Prostate gland (tissue), 2 donors: ENCODE measurements at regions of chr12 and their contacts with region 1.

Region 1: GRCh38 chr12:104381731-104382480 is 74.8 kb upstream of the CHST11 start:
- DNase-seq: peak; percentile 78
- H3K4me3 ChIP-seq: no peak overlapping the region
- H3K27ac ChIP-seq: no peak overlapping the region
- H3K4me1 ChIP-seq: no peaks in the 10 kb centered on the region
- H3K27me3 ChIP-seq: no peaks in the 10 kb centered on the region
- CTCF ChIP-seq: peak; percentile 81 to 95 (median 90)
- POLR2A ChIP-seq: no peak

Region 2: GRCh38 chr12:104250366-104251125 is 131.4 kb before region 1 on chr12:
- intact Hi-C with region 1: no loop called
- DNase-seq: no peak
- H3K4me3 ChIP-seq: no peak overlapping the region
- H3K27ac ChIP-seq: no peak overlapping the region
- H3K4me1 ChIP-seq: no peaks in the 10 kb centered on the region
- H3K27me3 ChIP-seq: no peaks in the 10 kb centered on the region
- CTCF ChIP-seq: no peak
- POLR2A ChIP-seq: no peak

Region 3: GRCh38 chr12:104877123-104877705 is 495.3 kb after region 1 on chr12:
- intact Hi-C with region 1: loop called (anchors 5 kb)
- DNase-seq: peak; percentile 19
- H3K4me3 ChIP-seq: no peak overlapping the region
- H3K27ac ChIP-seq: no peak overlapping the region
- H3K4me1 ChIP-seq: no peaks in the 10 kb centered on the region
- H3K27me3 ChIP-seq: no peaks in the 10 kb centered on the region
- CTCF ChIP-seq: peak; percentile 22 to 75 (median 47)
- POLR2A ChIP-seq: no peak

Region 4: GRCh38 chr12:105053116-105053572 is 671.2 kb after region 1 on chr12:
- intact Hi-C with region 1: loop called (anchors 5 kb)
- DNase-seq: peak; percentile 66
- H3K4me3 ChIP-seq: no peak overlapping the region
- H3K27ac ChIP-seq: no peak overlapping the region
- H3K4me1 ChIP-seq: no peaks in the 10 kb centered on the region
- H3K27me3 ChIP-seq: no peaks in the 10 kb centered on the region
- CTCF ChIP-seq: peak; percentile 50 to 88 (median 84)
- POLR2A ChIP-seq: no peak